Activated CD4-positive, alpha-beta memory T cell treated with anti-CD3 and anti-CD28 coated beads, Interleukin-2, amount 10 ng/mL, durations not matched to agents 7 days and 5 days (primary cell): ENCODE measurements at regions of chr17 and their contacts with region 1.

Region 1: GRCh38 chr17:59619293-59620063 is at the start of gene CLTC:
- DNase-seq: peak; percentile 93
- H3K4me3 Mint-ChIP-seq: peak within 1 kb of the TSS; percentile 89
- H3K27ac Mint-ChIP-seq: peak within 1 kb of the TSS; percentile 99
- H3K4me1 Mint-ChIP-seq: peaks cover 50% of the 10 kb centered on the region
- H3K27me3 Mint-ChIP-seq: no peaks in the 10 kb centered on the region
- total RNA-seq, gene CLTC: 156 to 163 TPM

Region 2: DNA sequence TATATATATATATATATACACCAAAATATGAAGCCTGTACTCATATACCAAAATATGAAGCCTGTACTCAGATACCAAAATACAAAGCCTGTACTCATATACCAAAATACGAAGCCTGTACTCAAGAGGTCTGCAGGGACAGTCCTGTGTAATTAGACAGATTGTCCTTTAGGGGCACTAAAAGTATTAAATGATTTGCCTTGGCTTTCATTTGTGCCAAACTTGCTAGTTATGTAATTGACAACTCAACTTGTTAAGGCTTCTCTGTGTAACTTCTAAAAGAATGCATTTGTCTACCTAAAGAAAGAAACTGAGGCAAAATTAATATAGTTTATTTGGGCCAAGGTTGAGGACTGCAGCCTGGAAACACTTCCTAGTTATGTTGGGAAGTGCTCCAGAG is 84.9 kb before region 1 on chr17:
- CTCF ChIA-PET with region 1: no interaction called
- POLR2A ChIA-PET with region 1: no interaction called
- DNase-seq: no peak
- H3K4me3 Mint-ChIP-seq: no peak overlapping the region
- H3K27ac Mint-ChIP-seq: no peak overlapping the region
- H3K4me1 Mint-ChIP-seq: no peaks in the 10 kb centered on the region
- H3K27me3 Mint-ChIP-seq: peaks cover 15% of the 10 kb centered on the region

Region 3: GRCh38 chr17:59550703-59551102 is 68.8 kb before region 1 on chr17:
- CTCF ChIA-PET with region 1: no interaction called
- POLR2A ChIA-PET with region 1: no interaction called
- DNase-seq: no peak
- H3K4me3 Mint-ChIP-seq: no peak overlapping the region
- H3K27ac Mint-ChIP-seq: no peak overlapping the region
- H3K4me1 Mint-ChIP-seq: no peaks in the 10 kb centered on the region
- H3K27me3 Mint-ChIP-seq: peaks cover 8% of the 10 kb centered on the region

Region 4: DNA sequence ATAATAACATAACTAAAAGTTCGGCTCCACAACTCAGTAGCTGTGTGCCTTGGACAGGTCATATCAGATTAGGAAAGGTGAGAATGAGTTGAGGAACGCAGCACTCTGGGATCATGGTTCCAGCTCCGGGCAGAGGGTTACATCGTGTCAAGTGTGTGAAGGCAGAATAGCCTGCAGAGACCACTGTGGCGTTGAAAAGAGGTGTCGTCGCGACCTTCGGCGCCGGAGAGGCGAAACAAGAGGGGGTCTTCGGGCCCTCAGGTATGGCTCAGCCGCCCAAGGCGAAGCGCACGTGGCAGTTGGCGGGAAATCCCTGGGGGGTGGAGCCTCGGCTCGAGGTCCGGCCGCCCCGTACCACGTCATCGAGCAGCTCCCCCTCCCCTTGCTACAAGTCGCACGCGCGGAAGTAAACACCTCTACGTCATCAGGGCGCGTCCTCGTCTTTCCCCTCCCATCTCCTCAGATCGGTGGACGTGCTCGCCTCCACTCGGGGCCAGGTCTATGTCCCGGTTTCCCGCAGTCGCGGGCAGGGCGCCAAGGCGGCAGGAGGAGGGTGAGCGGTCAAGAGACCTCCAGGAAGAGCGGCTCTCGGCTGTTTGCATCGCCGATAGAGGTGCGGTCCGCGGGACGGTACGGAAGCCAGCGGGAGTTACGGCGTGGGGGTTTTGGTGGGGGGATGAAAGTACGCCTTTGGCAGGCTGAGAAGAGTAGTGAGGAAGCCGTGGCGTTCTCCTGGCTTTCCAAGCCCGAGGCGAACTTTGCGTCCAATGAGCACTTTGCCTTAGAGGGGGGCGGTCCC is 54.1 kb before region 1 on chr17 and contains the start of gene DHX40:
- CTCF ChIA-PET with region 1: interaction called, 3 read pairs
- POLR2A ChIA-PET with region 1: interaction called, 46 read pairs
- DNase-seq: peak; percentile 95
- H3K4me3 Mint-ChIP-seq: peak within 1 kb of the TSS; percentile 100
- H3K27ac Mint-ChIP-seq: peak within 1 kb of the TSS; percentile 95
- H3K4me1 Mint-ChIP-seq: peaks cover 21% of the 10 kb centered on the region
- H3K27me3 Mint-ChIP-seq: no peaks in the 10 kb centered on the region
- total RNA-seq, gene DHX40: 20.0 to 24.4 TPM

Region 5: DNA sequence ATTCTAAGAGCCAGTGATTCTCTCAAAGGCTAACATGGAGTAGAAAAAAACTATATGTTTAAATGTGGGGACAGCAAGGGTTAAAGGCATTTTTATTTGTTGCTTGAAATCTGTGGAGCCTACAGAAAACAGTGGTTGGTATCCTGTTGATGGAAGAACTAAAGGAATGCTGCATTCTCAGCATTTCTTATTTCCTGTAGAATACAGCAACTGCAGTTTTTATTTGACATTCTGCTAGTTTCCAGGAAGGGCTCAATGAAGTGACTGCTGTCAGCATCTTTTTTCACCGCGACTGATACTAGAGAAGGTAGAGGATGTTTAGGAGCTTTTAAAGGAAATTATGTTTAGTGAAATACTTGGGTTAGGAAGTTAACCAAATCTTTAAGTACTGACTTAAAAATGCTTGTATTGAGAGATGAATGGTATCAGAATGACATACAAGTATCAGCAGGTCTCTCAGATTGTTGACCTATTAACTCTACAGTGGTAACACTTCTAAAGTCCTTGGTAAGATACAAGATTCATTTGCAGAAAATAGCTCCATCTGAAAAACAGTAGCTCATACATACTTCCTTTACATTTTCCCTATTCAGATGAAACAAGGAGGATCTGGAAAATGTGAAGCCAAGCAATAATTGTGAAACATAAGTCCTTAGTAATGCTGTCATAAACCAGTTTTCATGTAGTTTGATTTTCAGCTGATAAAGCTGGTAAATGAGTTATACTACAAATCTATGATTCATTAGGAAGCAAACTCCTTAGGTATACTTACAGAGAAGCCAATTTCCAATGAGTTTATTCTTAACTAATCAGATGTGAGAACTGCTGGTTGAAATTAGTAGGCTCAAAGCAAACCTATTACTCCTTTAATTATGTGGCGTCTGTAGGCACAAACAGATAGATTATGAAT is 15.4 kb after region 1 on chr17:
- CTCF ChIA-PET with region 1: interaction called, 5 read pairs
- POLR2A ChIA-PET with region 1: interaction called, 98 read pairs
- DNase-seq: peak; percentile 22
- H3K4me3 Mint-ChIP-seq: peak overlapping the region; percentile 23
- H3K27ac Mint-ChIP-seq: peak overlapping the region; percentile 69
- H3K4me1 Mint-ChIP-seq: peaks cover 64% of the 10 kb centered on the region
- H3K27me3 Mint-ChIP-seq: no peaks in the 10 kb centered on the region

Region 6: GRCh38 chr17:59671386-59671785 is 51.9 kb after region 1 on chr17:
- CTCF ChIA-PET with region 1: no interaction called
- POLR2A ChIA-PET with region 1: interaction called, 14 read pairs
- DNase-seq: no peak
- H3K4me3 Mint-ChIP-seq: no peak overlapping the region
- H3K27ac Mint-ChIP-seq: no peak overlapping the region
- H3K4me1 Mint-ChIP-seq: peaks cover 31% of the 10 kb centered on the region
- H3K27me3 Mint-ChIP-seq: no peaks in the 10 kb centered on the region

Region 7: GRCh38 chr17:59753522-59754467 is 134.3 kb after region 1 on chr17:
- CTCF ChIA-PET with region 1: no interaction called
- POLR2A ChIA-PET with region 1: interaction called, 12 read pairs
- DNase-seq: no peak
- H3K4me3 Mint-ChIP-seq: peak overlapping the region; percentile 35
- H3K27ac Mint-ChIP-seq: peak overlapping the region; percentile 81
- H3K4me1 Mint-ChIP-seq: peaks cover 71% of the 10 kb centered on the region
- H3K27me3 Mint-ChIP-seq: no peaks in the 10 kb centered on the region

Region 8: GRCh38 chr17:59837308-59838051 is 218.0 kb after region 1 on chr17:
- CTCF ChIA-PET with region 1: no interaction called
- POLR2A ChIA-PET with region 1: interaction called, 65 read pairs
- DNase-seq: peak; percentile 77
- H3K4me3 Mint-ChIP-seq: peak overlapping the region; percentile 100
- H3K27ac Mint-ChIP-seq: peak overlapping the region; percentile 99
- H3K4me1 Mint-ChIP-seq: peaks cover 37% of the 10 kb centered on the region
- H3K27me3 Mint-ChIP-seq: no peaks in the 10 kb centered on the region